ENCODE measurements at regions of chr20 and their contacts with region 1.

Region 1: GRCh38 chr20:17938871-17939619 is 29.5 kb downstream of the SNX5 start:
- DNase-seq: no peak
- H3K4me3 ChIP-seq: no peak overlapping the region
- CTCF ChIP-seq: peak; percentile 92

Region 2: DNA sequence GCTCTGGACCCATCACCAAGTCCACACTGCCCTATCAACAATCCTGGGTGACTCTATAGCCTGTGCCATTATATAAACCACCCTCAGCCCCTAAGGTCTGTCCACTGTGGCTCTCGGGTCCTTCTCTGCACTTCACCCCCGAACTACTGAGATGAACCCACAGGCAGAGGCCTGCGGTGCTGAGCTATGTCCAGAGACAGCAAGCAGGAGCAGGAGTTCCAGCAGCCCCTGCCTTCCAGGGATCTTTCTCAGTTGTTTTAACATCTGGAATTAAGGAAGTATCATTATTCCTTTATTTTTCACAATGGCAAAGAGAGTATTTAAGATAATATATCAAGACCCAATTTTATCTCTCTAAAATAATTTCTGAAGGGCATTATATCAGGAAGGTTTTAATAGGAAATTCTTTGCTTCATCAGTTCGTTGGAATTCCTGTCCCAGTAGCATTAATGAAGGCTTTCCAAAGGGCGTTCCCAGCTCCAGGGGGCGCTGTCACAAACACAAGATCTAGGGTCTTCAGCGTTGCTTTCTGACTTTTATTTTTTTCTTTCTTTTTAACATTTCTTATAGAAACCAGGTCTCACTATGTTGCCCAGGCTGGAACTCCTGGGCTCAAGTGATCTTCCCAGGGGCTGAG is 284.3 kb before region 1 on chr20:
- CTCF ChIA-PET with region 1: interaction called, 46 read pairs
- POLR2A ChIA-PET with region 1: no interaction called
- DNase-seq: no peak
- H3K4me3 ChIP-seq: no peak overlapping the region
- CTCF ChIP-seq: peak; percentile 51

Region 3: DNA sequence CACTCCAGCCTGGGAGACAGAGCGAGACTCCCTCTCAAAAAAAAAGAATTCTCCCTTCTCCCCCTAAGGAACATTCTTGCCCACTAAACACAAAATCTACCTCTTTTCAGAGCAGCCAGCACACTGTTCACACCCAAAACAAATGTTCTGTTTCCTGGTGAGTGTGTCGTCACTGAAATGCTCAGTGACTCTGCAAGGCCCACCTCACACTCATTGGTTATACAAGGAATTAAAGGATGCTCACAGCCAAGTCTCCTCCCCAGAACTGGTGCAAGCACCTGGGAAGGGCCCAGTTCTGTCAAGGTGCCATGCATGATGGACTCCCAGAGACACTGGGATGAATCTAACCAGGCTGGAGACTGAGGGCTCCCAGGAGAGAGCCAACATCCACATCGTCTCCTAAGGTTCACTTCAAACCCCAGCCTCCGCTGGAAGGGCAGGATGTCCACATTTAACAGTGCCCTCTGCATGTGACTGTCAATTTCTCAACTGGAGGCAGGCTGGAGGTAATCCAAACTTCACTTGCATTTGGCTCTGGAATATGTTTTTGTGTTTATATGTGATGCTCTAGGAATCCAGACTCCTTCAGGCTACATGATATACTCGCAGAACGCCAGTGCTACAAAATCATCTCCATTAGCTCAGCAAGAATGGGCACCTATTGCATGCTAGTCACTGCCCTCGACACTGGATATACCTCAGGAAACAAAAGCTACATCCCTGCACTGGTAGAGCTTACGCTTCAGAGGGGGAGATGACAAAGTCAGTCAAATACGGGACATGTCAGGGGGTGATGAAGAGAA is 264.1 kb before region 1 on chr20:
- CTCF ChIA-PET with region 1: interaction called, 35 read pairs
- POLR2A ChIA-PET with region 1: no interaction called
- DNase-seq: no peak
- H3K4me3 ChIP-seq: no peak overlapping the region
- CTCF ChIP-seq: no peak

Region 4: DNA sequence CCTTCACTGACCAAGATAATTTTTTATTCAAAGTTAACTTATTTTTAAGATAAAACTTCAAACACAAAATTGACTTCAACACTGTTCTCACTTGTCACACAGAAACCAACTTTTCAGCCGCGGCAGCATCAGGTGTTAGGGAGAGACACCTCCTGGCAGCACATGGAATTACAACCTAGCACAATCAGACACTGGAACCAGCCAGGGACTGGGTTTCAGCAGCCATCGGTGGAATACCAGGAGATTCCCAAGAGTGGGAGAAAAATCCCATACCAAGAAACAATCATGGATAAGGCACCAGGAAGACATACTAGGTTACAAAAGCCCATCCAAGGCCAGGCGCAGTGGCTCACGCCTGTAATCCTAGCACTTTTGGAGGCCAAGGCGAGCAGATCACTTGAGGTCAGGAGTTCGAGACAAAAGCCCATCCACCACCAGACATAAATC is 40.5 kb before region 1 on chr20:
- CTCF ChIA-PET with region 1: interaction called, 18 read pairs
- POLR2A ChIA-PET with region 1: no interaction called
- DNase-seq: no peak
- H3K4me3 ChIP-seq: no peak overlapping the region
- CTCF ChIP-seq: peak; percentile 88

Region 5: GRCh38 chr20:17925141-17925939 is 13.7 kb before region 1 on chr20:
- CTCF ChIA-PET with region 1: interaction called, 13 read pairs
- POLR2A ChIA-PET with region 1: no interaction called
- DNase-seq: no peak
- H3K4me3 ChIP-seq: no peak overlapping the region
- CTCF ChIP-seq: no peak

Region 6: DNA sequence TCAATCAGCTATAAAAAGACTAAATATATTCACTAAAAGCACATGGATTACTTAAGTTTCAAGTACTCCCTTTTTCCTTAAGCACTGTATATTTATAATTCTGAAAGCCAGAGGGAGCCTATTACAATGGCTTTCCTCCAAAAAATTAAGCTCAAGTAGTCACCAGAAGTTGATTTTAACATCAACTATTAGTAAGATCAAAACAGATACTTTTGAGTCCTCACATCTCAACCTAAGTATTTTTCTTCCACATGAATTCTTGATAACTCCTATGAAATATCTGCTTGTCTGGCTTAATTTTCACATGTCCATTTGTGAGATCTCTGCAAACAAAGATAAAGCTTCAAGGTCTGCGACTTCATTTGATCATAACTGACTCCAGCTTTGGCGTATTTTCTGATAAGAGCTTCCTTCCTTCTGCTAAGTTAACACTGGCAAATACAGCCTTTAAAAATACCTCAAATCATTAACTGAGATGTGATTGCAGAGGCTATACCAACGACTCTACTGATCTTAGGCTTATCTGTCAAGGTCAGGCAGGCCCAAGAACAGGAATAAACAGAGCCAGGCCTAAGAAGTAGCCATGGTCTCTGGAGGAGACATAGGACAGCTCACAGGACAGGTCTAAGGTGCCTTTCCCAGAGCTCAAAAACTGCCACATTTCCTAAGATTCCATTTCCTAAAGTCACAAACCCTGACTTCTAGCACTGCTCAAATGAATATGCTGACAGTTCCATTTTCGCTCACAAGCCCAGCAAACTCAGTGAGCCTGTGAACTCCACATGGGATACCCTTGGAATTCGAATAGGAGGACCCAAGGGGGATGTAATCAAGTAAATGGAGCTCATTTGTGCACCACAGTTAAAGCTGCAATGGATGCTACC is 19.6 kb after region 1 on chr20:
- CTCF ChIA-PET with region 1: interaction called, 167 read pairs
- POLR2A ChIA-PET with region 1: no interaction called
- DNase-seq: no peak
- H3K4me3 ChIP-seq: no peak overlapping the region
- CTCF ChIP-seq: no peak

Region 7: DNA sequence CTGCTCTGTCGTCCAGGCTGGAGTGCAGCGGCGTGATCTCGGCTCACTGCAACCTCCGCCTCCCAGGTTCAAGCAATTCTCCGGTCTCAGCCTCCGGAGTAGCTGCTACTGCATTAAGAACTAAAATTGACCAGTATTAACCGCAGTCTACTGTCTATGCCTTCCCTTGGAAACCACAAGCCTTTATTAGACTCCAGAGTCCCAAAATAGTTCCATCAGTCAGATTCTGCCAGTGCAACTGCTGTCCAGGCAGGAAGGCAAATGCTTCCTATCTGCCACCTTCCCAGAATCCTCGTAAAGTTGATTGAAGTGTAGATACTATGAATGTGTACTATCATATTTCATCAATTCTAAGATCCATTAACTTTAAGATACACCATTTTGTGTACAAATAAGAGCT is 215.3 kb after region 1 on chr20:
- CTCF ChIA-PET with region 1: no interaction called
- POLR2A ChIA-PET with region 1: no interaction called
- DNase-seq: no peak
- H3K4me3 ChIP-seq: no peak overlapping the region
- CTCF ChIP-seq: no peak